ENCODE measurements at regions of chr3 and their contacts with region 1.

Region 1: DNA sequence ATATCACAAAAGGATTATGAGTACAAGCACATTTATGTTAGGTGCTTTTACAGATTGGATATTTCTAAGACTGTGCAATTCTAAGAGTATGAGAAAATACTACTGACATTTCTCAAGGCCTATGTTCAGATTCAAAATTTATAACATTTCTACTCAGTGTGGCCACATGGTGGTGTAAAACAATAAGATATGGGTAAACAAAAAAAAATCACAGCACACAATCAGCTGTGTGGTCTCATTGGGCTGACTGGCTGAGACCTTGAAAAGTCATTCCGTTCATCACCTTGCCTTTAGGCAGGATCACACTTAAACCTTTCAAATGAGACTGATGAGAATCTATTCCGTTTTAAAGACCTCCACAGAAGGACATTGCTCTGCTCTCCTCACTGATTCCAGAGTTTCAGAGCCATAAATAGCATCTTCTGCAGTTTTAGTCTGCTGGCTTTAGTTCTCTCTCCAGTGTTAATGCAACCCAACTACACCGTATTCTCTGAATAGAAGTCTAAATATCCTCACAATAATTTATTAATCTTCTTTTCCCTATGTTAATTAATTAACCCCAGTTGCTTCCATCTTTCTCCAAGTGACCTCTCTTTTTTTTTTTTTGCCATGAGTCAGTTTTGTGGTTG is 158.2 kb downstream of the SPATA16 start:
- DNase-seq: no peak

Region 2: GRCh38 chr3:172836390-172836997 is 146.4 kb before region 1 on chr3:
- intact Hi-C with region 1: loop called (anchors 10 kb)
- DNase-seq: no peak

Region 3: DNA sequence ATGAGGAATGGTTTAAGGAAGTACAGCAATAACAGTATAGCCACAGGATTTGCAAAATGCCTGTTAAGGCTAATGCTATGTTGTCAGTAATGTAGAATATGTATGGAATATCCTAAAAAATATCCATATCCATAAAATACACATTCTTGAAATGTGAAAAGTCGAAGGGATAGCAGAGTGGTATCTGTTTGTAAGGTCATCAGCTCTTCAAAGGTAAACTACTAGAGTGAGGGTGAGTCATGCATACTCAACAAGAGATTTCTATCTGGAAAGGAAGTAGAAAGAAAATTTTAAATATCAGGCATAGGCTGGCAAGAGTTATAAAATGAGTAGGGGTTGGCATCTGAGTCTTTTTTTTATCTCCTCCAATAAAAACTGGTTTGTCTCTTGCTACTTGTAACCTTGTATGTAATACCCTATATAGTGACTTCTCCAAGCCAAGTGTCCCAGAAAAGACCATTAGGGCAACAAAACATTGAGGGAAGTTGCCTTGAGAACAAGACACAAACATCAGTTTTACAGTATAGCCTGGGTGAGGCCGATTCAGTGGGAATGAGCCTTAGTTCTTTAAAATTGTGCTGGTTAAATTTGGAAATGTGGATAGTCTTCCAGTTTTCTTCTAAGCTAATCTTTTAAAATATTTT is 55.1 kb after region 1 on chr3:
- intact Hi-C with region 1: loop called (anchors 5 kb)
- DNase-seq: no peak

Region 4: GRCh38 chr3:173395412-173396181 is 412.7 kb after region 1 on chr3:
- intact Hi-C with region 1: loop called (anchors 10 kb)
- DNase-seq: peak; percentile 93

Region 5: GRCh38 chr3:173553635-173554280 is 570.9 kb after region 1 on chr3:
- intact Hi-C with region 1: loop called (anchors 5 kb)
- DNase-seq: no peak

Region 6: DNA sequence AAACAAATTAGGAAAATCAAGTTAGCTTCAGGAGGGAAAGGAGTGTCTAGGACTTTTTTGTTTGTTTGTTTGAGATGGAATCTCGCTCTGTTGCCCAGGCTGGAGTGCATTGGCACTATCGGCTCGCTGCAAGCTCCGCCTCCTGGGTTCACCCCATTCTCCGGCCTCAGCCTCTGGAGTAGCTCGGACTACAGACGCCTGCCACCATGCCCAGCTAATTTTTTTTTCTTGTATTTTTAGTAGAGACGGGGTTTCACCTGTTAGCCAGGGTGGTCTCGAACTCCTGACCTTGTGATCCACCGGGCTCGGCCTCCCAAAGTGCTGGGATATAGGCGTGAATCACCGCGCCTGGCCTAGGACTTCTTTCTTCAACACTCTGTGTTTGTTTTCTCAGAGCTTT is 585.8 kb after region 1 on chr3:
- intact Hi-C with region 1: loop called (anchors 5 kb)
- DNase-seq: no peak